Thyroid gland (tissue), 4 donors: ENCODE measurements at regions of chr10 and their contacts with region 1.

Region 1: DNA sequence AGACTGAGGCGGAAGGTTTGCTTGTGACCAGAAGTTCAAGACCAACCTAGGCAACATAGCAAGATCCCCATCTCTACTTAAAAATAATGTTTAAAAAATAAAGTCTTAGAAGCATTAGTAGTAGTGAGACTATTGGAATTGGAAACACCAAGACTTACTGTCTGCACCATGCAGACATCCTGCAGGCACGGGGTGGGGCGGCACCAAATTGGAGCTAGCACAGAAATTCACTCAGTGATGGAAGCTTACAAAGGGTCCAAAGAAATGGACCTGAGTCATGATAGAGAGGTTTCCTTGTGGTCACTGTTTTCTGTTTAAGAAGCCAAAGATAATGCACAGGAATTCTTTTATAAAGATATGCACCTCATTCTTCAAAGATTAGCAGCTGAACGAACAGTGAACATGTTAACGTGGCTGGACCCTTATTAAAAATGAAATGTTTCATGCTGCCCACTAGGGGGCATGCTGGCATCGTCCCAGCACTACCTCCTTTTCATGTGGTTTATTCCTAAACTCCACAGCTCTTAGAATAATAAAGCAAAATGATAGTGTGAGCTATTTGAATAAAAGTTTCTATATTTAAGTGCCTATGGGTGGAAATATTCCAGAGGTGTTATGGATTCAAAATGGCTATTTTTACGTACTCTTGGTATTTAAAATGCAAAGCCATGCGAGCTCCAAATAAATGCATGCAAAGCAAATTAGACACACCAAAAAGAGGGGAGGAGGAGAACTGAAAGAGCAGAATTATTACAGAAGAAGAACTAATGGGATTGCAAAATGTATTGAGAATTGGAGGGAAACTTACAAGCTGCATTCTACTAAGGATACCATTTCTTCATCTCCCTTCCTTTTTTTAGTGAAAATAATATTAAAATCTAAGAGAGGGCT is 28.6 kb downstream of the PDSS1 start:
- DNase-seq: peak; percentile 49 to 78
- H3K4me3 ChIP-seq: no peak overlapping the region
- H3K27ac ChIP-seq: no peak overlapping the region
- H3K4me1 ChIP-seq: no peaks in the 10 kb centered on the region
- H3K27me3 ChIP-seq: no peaks in the 10 kb centered on the region
- CTCF ChIP-seq: peak; percentile 44 to 83 (median 80)
- POLR2A ChIP-seq: no peak

Region 2: DNA sequence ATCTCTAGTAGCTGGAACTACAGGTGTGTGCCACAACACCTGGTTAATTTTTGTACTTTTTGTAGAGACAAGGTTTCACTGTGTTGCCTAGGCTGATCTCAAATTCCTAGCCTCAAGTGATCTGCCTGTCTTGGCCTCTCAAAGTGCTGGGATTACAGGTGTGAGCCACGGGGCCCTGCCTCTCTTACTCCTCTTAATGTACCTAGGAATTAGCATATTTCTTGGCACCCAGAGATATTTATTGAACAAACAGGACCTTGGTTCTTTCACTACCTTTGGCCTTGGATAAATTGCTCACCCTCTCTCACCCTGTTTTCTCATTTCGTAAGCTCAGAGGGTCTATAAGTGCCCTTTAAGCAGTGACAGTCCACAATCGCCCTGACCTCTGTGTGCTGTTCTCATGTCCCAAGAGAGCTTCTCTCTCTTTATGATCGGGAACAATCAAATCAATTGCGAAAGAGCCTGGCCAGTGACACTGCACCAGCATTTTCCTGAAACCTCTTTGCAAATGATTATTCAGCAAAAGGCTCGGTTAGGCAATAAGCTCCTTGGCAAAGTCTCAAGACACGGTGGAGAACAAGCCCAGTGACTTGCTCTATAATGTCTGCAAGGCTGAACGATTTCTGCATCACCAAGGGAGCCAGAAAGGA is 170.2 kb before region 1 on chr10:
- intact Hi-C with region 1: no loop called
- DNase-seq: peak; percentile 57 to 62
- H3K4me3 ChIP-seq: no peak overlapping the region
- H3K27ac ChIP-seq: no peak overlapping the region
- H3K4me1 ChIP-seq: peaks cover 0 to 7% of the 10 kb centered on the region in 2 donors
- H3K27me3 ChIP-seq: no peaks in the 10 kb centered on the region
- CTCF ChIP-seq: no peak
- POLR2A ChIP-seq: no peak

Region 3: GRCh38 chr10:26860443-26861204 is 134.5 kb after region 1 on chr10 and contains the start of gene ABI1:
- intact Hi-C with region 1: loop called (anchors 5 kb)
- DNase-seq: peak; percentile 98
- H3K4me3 ChIP-seq: peak within 1 kb of the TSS; percentile 71 to 92 (median 91)
- H3K27ac ChIP-seq: peak within 1 kb of the TSS; percentile 93 to 95 (median 94)
- H3K4me1 ChIP-seq: peaks cover 10 to 22% of the 10 kb centered on the region in 2 donors
- H3K27me3 ChIP-seq: no peaks in the 10 kb centered on the region
- CTCF ChIP-seq: no peak
- POLR2A ChIP-seq: peak; percentile 92 to 96
- total RNA-seq, gene ABI1: 42.7 to 72.3 (median 47.4) TPM

Region 4: GRCh38 chr10:26881600-26882331 is 155.7 kb after region 1 on chr10:
- intact Hi-C with region 1: loop called (anchors 2 kb)
- DNase-seq: no peak
- H3K4me3 ChIP-seq: no peak overlapping the region
- H3K27ac ChIP-seq: no peak overlapping the region
- H3K4me1 ChIP-seq: no peaks in the 10 kb centered on the region
- H3K27me3 ChIP-seq: no peaks in the 10 kb centered on the region
- CTCF ChIP-seq: peak; percentile 18 to 87 (median 73)
- POLR2A ChIP-seq: no peak